ENCODE measurements at regions of chr4 and their contacts with region 1.

Region 1: DNA sequence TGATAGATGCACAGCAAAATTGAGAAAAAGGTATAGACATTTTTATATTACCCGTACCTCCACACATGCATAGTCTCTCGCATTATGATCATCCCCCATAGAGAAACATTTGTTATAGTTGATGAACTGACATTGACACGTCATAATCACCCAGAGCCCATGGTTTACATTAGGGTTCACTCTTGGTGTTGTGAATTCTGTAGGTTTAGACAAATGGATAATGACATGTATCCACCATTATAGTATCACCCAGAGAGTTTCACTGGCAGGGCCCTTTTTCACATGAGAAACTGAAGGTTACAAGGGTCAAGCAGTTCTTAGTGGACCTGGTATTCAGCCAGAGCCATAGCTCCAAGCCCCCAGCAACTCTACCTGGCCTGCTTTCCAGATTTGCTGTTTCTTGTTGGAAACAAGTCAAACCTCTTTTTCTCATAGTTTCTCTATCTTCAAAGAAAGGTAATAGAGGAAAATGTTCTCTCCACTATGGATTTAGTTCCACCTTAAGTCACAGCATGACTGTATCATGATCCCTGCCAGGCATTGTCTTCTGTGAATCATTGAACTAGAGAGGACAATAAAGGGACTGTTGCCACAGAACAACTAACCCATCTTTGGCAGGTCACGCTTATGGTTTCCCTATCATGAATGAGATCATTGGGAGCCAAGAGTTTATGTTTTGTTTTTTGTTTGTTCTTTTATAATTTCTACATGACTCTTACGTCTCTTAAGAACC is 64.0 kb downstream of the HHIP start:
- DNase-seq: peak in 30 of 42 donors; percentile 13 to 88 (median 59)

Region 2: GRCh38 chr4:144649646-144650045 is 60.3 kb before region 1 on chr4:
- intact Hi-C with region 1: loop called (anchors 2 kb)
- DNase-seq: peak in 1 of 42 donors; percentile 44

Measured in head of caudate nucleus (tissue), 42 donors.